Gastrocnemius medialis (tissue), 4 donors: ENCODE measurements at regions of chr4 and their contacts with region 1.

Region 1: DNA sequence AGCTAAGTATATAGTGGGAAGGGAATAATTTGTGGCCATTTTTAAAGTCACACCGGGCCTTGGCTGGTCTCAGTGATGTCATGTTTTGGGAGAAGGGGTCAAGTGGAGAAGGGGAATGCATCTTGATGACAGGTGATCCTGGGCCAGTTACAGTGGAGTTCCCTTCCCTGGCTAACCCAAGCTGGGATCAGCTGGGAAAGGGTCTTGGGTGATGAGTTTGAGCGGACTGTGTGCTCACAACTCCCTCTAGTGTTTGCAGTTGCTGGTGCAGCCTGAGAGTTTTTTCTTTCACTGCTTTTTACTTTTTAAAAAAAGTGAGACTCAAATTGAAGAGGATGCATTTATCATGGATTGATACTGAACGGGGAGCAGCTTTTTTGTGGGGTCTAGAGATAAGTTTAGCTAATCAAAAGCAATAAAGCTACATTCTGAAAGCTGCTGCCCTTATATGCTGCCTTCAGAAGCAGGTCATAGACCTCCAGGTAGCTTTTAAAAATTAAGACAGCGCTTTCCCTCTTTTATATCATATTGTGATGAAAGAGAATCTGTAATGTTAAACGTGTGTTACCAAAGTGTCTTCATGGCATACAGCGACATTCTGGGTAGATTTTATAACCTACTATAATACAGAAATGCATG is 164.7 kb downstream of the DCLK2 start:
- DNase-seq: no peak
- ATAC-seq: no peak
- H3K4me3 ChIP-seq: no peak overlapping the region
- H3K27ac ChIP-seq: no peak overlapping the region
- H3K4me1 ChIP-seq: no peaks in the 10 kb centered on the region
- H3K27me3 ChIP-seq: no peaks in the 10 kb centered on the region
- CTCF ChIP-seq: peak in 4 of 5 experiments; percentile 44 to 74 (median 60)
- POLR2A ChIP-seq: no peak

Region 2: GRCh38 chr4:149980941-149981340 is 262.0 kb before region 1 on chr4:
- in situ Hi-C with region 1: no loop called
- intact Hi-C with region 1: loop called (anchors 5 kb)
- DNase-seq: no peak
- ATAC-seq: no peak
- H3K4me3 ChIP-seq: no peak overlapping the region
- H3K27ac ChIP-seq: no peak overlapping the region
- H3K4me1 ChIP-seq: no peaks in the 10 kb centered on the region
- H3K27me3 ChIP-seq: no peaks in the 10 kb centered on the region
- CTCF ChIP-seq: peak in 4 of 5 experiments; percentile 28 to 70 (median 52)
- POLR2A ChIP-seq: no peak

Region 3: GRCh38 chr4:149999485-150000074 is 243.4 kb before region 1 on chr4:
- in situ Hi-C with region 1: loop called in 1 of 4 experiments (anchors 10 kb)
- intact Hi-C with region 1: no loop called
- DNase-seq: peak in 1 of 2 donors; percentile 7
- ATAC-seq: no peak
- H3K4me3 ChIP-seq: no peak overlapping the region
- H3K27ac ChIP-seq: no peak overlapping the region
- H3K4me1 ChIP-seq: no peaks in the 10 kb centered on the region
- H3K27me3 ChIP-seq: no peaks in the 10 kb centered on the region
- CTCF ChIP-seq: peak in 3 of 5 experiments; percentile 16 to 52 (median 47)
- POLR2A ChIP-seq: no peak

Region 4: GRCh38 chr4:150010525-150011126 is 232.3 kb before region 1 on chr4:
- in situ Hi-C with region 1: loop called in 1 of 4 experiments (anchors 10 kb)
- intact Hi-C with region 1: loop called (anchors 2 kb)
- DNase-seq: no peak
- ATAC-seq: no peak
- H3K4me3 ChIP-seq: no peak overlapping the region
- H3K27ac ChIP-seq: no peak overlapping the region
- H3K4me1 ChIP-seq: peaks cover 0 to 4% of the 10 kb centered on the region in 2 donors
- H3K27me3 ChIP-seq: no peaks in the 10 kb centered on the region
- CTCF ChIP-seq: peak in 3 of 5 experiments; percentile 22 to 47 (median 32)
- POLR2A ChIP-seq: no peak